Breast epithelium (tissue), 4 donors: ENCODE measurements at regions of chr13 and their contacts with region 1.

Region 1: GRCh38 chr13:83485101-83485500 is 397.2 kb downstream of the SLITRK1 start:
- DNase-seq: no peak
- H3K4me3 ChIP-seq: no peak overlapping the region
- H3K27ac ChIP-seq: no peak overlapping the region
- H3K4me1 ChIP-seq: no peaks in the 10 kb centered on the region
- H3K27me3 ChIP-seq: no peaks in the 10 kb centered on the region
- CTCF ChIP-seq: no peak
- POLR2A ChIP-seq: no peak

Region 2: GRCh38 chr13:83423861-83424260 is 61.2 kb before region 1 on chr13:
- intact Hi-C with region 1: no loop called
- DNase-seq: no peak
- H3K4me3 ChIP-seq: no peak overlapping the region
- H3K27ac ChIP-seq: no peak overlapping the region
- H3K4me1 ChIP-seq: no peaks in the 10 kb centered on the region
- H3K27me3 ChIP-seq: no peaks in the 10 kb centered on the region
- CTCF ChIP-seq: no peak
- POLR2A ChIP-seq: no peak

Region 3: DNA sequence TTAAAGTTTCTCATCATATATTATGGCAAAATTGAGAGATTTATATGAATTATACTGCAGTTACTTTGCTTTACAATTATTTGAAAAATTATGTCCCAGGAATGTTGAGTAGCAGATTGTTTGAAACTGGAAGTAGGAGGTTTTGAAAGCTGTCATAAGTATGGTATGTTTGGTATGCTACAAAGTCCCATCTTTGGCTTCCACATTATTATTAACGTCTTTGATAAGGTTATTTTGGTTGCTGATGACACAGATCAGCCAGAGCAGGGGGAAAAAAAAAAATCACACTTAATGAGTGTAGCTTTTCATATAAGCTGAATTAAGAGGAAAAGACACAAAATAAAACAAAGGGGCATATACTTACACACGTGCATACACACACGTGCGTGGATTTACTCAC is 267.0 kb after region 1 on chr13:
- intact Hi-C with region 1: loop called (anchors 5 kb)
- DNase-seq: no peak
- H3K4me3 ChIP-seq: no peak overlapping the region
- H3K27ac ChIP-seq: no peak overlapping the region
- H3K4me1 ChIP-seq: no peaks in the 10 kb centered on the region
- H3K27me3 ChIP-seq: no peaks in the 10 kb centered on the region
- CTCF ChIP-seq: no peak
- POLR2A ChIP-seq: no peak